Activated CD4-positive, alpha-beta memory T cell treated with anti-CD3 and anti-CD28 coated beads for 36 hours (primary cell): ENCODE measurements at regions of chr12 and their contacts with region 1.

Region 1: GRCh38 chr12:81450920-81451739 is 308.0 kb downstream of the PPFIA2 start:
- DNase-seq: no peak
- H3K4me3 Mint-ChIP-seq: no peak overlapping the region
- H3K27ac Mint-ChIP-seq: no peak overlapping the region
- H3K4me1 Mint-ChIP-seq: no peaks in the 10 kb centered on the region
- H3K27me3 Mint-ChIP-seq: no peaks in the 10 kb centered on the region

Region 2: GRCh38 chr12:81284137-81284536 is 167.0 kb before region 1 on chr12:
- CTCF ChIA-PET with region 1: no interaction called
- POLR2A ChIA-PET with region 1: no interaction called
- intact Hi-C with region 1: no loop called
- DNase-seq: no peak
- H3K4me3 Mint-ChIP-seq: no peak overlapping the region
- H3K27ac Mint-ChIP-seq: no peak overlapping the region
- H3K4me1 Mint-ChIP-seq: no peaks in the 10 kb centered on the region
- H3K27me3 Mint-ChIP-seq: no peaks in the 10 kb centered on the region

Region 3: GRCh38 chr12:81389550-81390099 is 61.5 kb before region 1 on chr12:
- CTCF ChIA-PET with region 1: no interaction called
- POLR2A ChIA-PET with region 1: no interaction called
- intact Hi-C with region 1: no loop called
- DNase-seq: no peak
- H3K4me3 Mint-ChIP-seq: no peak overlapping the region
- H3K27ac Mint-ChIP-seq: no peak overlapping the region
- H3K4me1 Mint-ChIP-seq: no peaks in the 10 kb centered on the region
- H3K27me3 Mint-ChIP-seq: no peaks in the 10 kb centered on the region

Region 4: DNA sequence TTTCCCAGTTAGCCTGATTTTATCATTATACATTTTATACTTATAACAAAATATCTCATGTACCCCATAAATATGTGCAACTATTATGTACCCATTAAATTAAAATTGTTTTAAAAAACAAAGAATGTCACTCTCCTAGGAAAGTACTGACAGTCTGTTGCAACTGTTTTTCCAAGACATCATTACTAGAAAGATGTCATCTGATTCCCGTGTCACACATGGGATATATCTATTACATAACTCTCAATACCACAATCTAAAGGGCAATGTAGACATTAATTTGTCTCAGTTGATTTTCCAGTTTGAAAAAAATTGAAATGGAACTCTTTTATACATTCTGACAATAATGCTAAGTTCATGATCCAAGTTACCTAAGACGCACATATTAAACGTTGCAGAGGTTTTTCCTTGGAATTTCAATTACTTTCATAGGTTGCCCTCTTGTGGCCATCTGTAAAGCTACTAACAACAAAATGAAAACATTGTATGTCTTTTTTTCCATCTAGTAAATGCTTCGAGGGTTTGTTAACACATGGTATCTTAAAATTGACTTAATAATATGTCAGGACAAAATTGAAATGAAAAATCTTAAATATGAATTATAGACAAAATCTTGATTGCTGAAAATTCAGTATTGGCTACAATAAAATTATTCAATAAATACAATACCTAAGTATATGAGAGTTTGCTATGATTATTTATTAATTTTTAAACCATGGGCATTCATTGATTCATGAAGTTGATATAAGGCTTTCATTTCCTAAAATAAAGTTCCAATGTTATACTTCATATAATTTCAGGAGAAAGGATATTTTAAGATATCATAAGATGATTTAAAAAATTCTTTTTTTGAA is 176.4 kb after region 1 on chr12:
- CTCF ChIA-PET with region 1: no interaction called
- POLR2A ChIA-PET with region 1: no interaction called
- intact Hi-C with region 1: loop called (anchors 5 kb)
- DNase-seq: no peak
- H3K4me3 Mint-ChIP-seq: no peak overlapping the region
- H3K27ac Mint-ChIP-seq: no peak overlapping the region
- H3K4me1 Mint-ChIP-seq: no peaks in the 10 kb centered on the region
- H3K27me3 Mint-ChIP-seq: no peaks in the 10 kb centered on the region